ENCODE measurements at regions of chr6 and their contacts with region 1.

Region 1: GRCh38 chr6:125114248-125114858 is 39.2 kb upstream of the TPD52L1 start:
- DNase-seq: peak in 3 of 5 donors; percentile 37 to 76 (median 55)
- H3K4me3 ChIP-seq: no peak overlapping the region
- H3K27ac ChIP-seq: no peak overlapping the region
- H3K4me1 ChIP-seq: no peaks in the 10 kb centered on the region
- H3K27me3 ChIP-seq: no peaks in the 10 kb centered on the region
- CTCF ChIP-seq: peak; percentile 89

Region 2: DNA sequence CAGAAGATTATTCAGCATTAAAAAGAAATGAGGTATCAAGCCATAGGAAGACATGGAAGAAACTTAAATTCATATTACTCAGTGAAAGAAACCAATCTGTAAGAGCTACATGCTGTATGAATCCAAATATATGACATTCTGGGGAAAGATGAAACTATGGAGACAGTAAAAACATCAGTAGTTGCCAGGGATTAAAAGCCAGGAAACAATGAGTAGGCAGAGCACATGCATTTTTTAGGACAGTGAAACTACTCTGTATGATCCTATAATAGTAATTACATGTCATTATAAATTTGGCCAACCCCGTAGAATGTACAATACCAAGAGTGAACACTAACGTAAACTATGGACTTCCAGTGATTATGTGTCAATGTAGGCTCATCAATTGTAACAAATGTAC is 244.9 kb before region 1 on chr6:
- intact Hi-C with region 1: loop called (anchors 5 kb)
- DNase-seq: no peak
- H3K4me3 ChIP-seq: no peak overlapping the region
- H3K27ac ChIP-seq: no peak overlapping the region
- H3K4me1 ChIP-seq: no peaks in the 10 kb centered on the region
- H3K27me3 ChIP-seq: no peaks in the 10 kb centered on the region
- CTCF ChIP-seq: no peak